ENCODE measurements at regions of chr11 and their contacts with region 1.

Region 1: GRCh38 chr11:68257475-68258362 is 14.1 kb downstream of the C11orf24 start:
- DNase-seq: peak; percentile 94 to 97
- ATAC-seq: peak; percentile 70 to 91 (median 86)
- H3K4me3 ChIP-seq: peak overlapping the region in 4 of 10 donors; percentile 18 to 23 (median 20)
- H3K27ac ChIP-seq: peak overlapping the region in 1 of 10 donors; percentile 36
- H3K4me1 ChIP-seq: peaks cover 0 to 30% (median 6%) of the 10 kb centered on the region in 9 donors
- H3K27me3 ChIP-seq: no peaks in the 10 kb centered on the region
- CTCF ChIP-seq: peak; percentile 78 to 94 (median 89)

Region 2: GRCh38 chr11:68297812-68298658 is 40.3 kb after region 1 on chr11:
- intact Hi-C with region 1: loop called (anchors 1 to 5 kb)
- DNase-seq: peak; percentile 75 to 83
- ATAC-seq: peak; percentile 95 to 98 (median 97)
- H3K4me3 ChIP-seq: peak overlapping the region in 4 of 10 donors; percentile 9 to 23 (median 20)
- H3K27ac ChIP-seq: peak overlapping the region in 1 of 10 donors; percentile 5
- H3K4me1 ChIP-seq: peaks cover 6 to 28% (median 17%) of the 10 kb centered on the region in 9 donors
- H3K27me3 ChIP-seq: no peaks in the 10 kb centered on the region
- CTCF ChIP-seq: peak; percentile 97 to 99 (median 98)

Measured in heart right ventricle (tissue), 16 donors.